ENCODE measurements at regions of chr6 and their contacts with region 1.

Region 1: DNA sequence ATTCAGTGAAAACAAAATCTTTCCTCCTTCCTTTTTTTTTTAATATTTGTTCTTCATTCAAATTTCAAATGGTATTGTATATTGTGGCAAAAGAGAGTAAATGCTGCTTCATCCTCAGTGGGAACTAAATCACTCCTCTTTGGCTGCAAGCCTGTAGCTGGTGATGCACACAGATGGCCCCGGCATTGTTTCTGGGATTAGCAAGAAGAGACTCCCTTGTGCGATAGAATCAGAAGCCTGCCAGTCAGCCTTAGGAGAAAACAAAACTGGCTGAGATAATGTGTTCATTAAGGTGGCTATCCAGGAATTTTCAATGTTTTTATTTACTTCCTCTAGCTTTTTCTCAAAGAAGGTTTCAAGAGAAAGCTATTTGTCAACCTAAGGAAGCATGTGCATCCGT is 20.7 kb upstream of the ELOVL2 start:
- DNase-seq: no peak
- ATAC-seq: no peak
- H3K4me3 ChIP-seq: no peak overlapping the region
- H3K27ac ChIP-seq: no peak overlapping the region
- H3K4me1 ChIP-seq: no peaks in the 10 kb centered on the region
- H3K27me3 ChIP-seq: no peaks in the 10 kb centered on the region
- CTCF ChIP-seq: no peak
- POLR2A ChIP-seq: no peak
- RAD21 ChIP-seq: no peak

Region 2: GRCh38 chr6:10478187-10479040 is 586.4 kb before region 1 on chr6:
- CTCF ChIA-PET with region 1: interaction called, 13 read pairs
- POLR2A ChIA-PET with region 1: no interaction called
- RAD21 ChIA-PET with region 1: no interaction called
- intact Hi-C with region 1: loop called (anchors 1 kb)
- DNase-seq: peak; percentile 41
- ATAC-seq: peak; percentile 79
- H3K4me3 ChIP-seq: no peak overlapping the region
- H3K27ac ChIP-seq: no peak overlapping the region
- H3K4me1 ChIP-seq: peaks cover 0 to 10% of the 10 kb centered on the region in 2 experiments; a peak in 2 of 4 replicates
- H3K27me3 ChIP-seq: no peaks in the 10 kb centered on the region
- CTCF ChIP-seq: peak; percentile 46 to 79 (median 56); a peak in 4 of 6 replicates
- POLR2A ChIP-seq: no peak
- RAD21 ChIP-seq: peak; percentile 85

Region 3: GRCh38 chr6:10847684-10848083 is 217.2 kb before region 1 on chr6:
- CTCF ChIA-PET with region 1: interaction called, 6 read pairs
- POLR2A ChIA-PET with region 1: no interaction called
- RAD21 ChIA-PET with region 1: no interaction called
- intact Hi-C with region 1: loop called (anchors 5 kb)
- DNase-seq: no peak
- ATAC-seq: no peak
- H3K4me3 ChIP-seq: no peak overlapping the region
- H3K27ac ChIP-seq: no peak overlapping the region
- H3K4me1 ChIP-seq: no peaks in the 10 kb centered on the region
- H3K27me3 ChIP-seq: no peaks in the 10 kb centered on the region
- CTCF ChIP-seq: peak; percentile 18 to 39 (median 20); a peak in 4 of 6 replicates
- POLR2A ChIP-seq: no peak
- RAD21 ChIP-seq: peak; percentile 37

Region 4: GRCh38 chr6:10954590-10955010 is 110.2 kb before region 1 on chr6:
- CTCF ChIA-PET with region 1: interaction called, 95 read pairs
- POLR2A ChIA-PET with region 1: no interaction called
- RAD21 ChIA-PET with region 1: interaction called, 12 to 25 read pairs
- intact Hi-C with region 1: loop called (anchors 1 kb)
- DNase-seq: peak; percentile 54
- ATAC-seq: peak; percentile 95
- H3K4me3 ChIP-seq: no peak overlapping the region
- H3K27ac ChIP-seq: no peak overlapping the region
- H3K4me1 ChIP-seq: no peaks in the 10 kb centered on the region
- H3K27me3 ChIP-seq: no peaks in the 10 kb centered on the region
- CTCF ChIP-seq: peak; percentile 68 to 94 (median 92)
- POLR2A ChIP-seq: no peak
- RAD21 ChIP-seq: peak; percentile 65

Region 5: DNA sequence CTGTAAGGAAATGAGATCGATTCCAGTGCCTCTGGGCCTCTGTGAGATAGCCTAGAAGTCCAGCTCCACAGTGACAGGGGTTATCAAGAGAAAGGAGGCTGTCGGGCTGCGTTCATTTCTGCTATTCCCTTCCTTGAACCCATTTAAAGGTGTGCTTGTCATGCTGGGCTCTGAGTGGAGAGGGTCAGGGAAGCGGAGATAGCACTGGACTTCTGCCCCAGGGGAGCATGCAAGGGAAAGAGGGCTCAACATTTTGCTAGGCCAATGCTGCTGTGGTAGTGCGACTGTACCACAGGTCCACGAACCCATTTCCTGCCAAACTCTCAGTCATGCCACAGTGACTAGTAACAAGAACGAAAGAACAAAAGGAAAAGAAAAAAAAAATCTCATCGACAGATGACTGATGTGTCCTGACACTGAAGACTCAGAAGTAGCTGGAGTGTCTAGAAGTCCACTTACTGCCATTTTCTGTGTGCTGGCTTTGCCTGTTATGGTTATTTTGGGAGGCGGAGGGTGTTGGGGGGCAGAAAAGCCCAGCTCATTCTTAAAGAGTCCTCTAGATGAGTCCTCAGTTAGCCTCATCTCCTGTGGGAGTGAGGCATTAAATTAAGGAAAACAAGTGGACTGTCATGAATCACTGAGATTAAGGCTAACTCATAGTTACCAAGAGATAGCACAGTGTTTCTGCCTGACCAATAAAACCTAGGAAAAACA is 159.6 kb after region 1 on chr6:
- CTCF ChIA-PET with region 1: no interaction called
- POLR2A ChIA-PET with region 1: no interaction called
- RAD21 ChIA-PET with region 1: no interaction called
- intact Hi-C with region 1: no loop called
- DNase-seq: no peak
- ATAC-seq: no peak
- H3K4me3 ChIP-seq: no peak overlapping the region
- H3K27ac ChIP-seq: no peak overlapping the region
- H3K4me1 ChIP-seq: no peaks in the 10 kb centered on the region
- H3K27me3 ChIP-seq: no peaks in the 10 kb centered on the region
- CTCF ChIP-seq: no peak
- POLR2A ChIP-seq: no peak
- RAD21 ChIP-seq: no peak